Mammary epithelial cell (primary cell): ENCODE measurements at regions of chr16 and their contacts with region 1.

Region 1: GRCh38 chr16:29790183-29790952 is at the start of gene KIF22:
- DNase-seq: peak; percentile 99
- H3K4me3 ChIP-seq: peak within 1 kb of the TSS; percentile 77 to 98 (median 81)
- H3K27ac ChIP-seq: peak within 1 kb of the TSS; percentile 58
- H3K4me1 ChIP-seq: peaks cover 21% of the 10 kb centered on the region
- H3K27me3 ChIP-seq: no peaks in the 10 kb centered on the region
- CTCF ChIP-seq: peak; percentile 53 to 75
- total RNA-seq, gene KIF22: 20.2 to 55.0 TPM

Region 2: GRCh38 chr16:29673501-29673900 is 116.9 kb before region 1 on chr16:
- CTCF ChIA-PET with region 1: interaction called, 21 read pairs
- dilution Hi-C with region 1: no loop called
- in situ Hi-C with region 1: no loop called
- intact Hi-C with region 1: no loop called
- DNase-seq: no peak
- H3K4me3 ChIP-seq: no peak overlapping the region
- H3K27ac ChIP-seq: no peak overlapping the region
- H3K4me1 ChIP-seq: no peaks in the 10 kb centered on the region
- H3K27me3 ChIP-seq: no peaks in the 10 kb centered on the region
- CTCF ChIP-seq: no peak

Region 3: GRCh38 chr16:30028438-30029076 is 238.2 kb after region 1 on chr16:
- CTCF ChIA-PET with region 1: no interaction called
- dilution Hi-C with region 1: no loop called
- in situ Hi-C with region 1: no loop called
- intact Hi-C with region 1: no loop called
- DNase-seq: no peak
- H3K4me3 ChIP-seq: no peak overlapping the region
- H3K27ac ChIP-seq: no peak overlapping the region
- H3K4me1 ChIP-seq: no peaks in the 10 kb centered on the region
- H3K27me3 ChIP-seq: peaks cover 4% of the 10 kb centered on the region
- CTCF ChIP-seq: no peak